Posterior vena cava (tissue), 2 donors: ENCODE measurements at regions of chr1 and their contacts with region 1.

Region 1: DNA sequence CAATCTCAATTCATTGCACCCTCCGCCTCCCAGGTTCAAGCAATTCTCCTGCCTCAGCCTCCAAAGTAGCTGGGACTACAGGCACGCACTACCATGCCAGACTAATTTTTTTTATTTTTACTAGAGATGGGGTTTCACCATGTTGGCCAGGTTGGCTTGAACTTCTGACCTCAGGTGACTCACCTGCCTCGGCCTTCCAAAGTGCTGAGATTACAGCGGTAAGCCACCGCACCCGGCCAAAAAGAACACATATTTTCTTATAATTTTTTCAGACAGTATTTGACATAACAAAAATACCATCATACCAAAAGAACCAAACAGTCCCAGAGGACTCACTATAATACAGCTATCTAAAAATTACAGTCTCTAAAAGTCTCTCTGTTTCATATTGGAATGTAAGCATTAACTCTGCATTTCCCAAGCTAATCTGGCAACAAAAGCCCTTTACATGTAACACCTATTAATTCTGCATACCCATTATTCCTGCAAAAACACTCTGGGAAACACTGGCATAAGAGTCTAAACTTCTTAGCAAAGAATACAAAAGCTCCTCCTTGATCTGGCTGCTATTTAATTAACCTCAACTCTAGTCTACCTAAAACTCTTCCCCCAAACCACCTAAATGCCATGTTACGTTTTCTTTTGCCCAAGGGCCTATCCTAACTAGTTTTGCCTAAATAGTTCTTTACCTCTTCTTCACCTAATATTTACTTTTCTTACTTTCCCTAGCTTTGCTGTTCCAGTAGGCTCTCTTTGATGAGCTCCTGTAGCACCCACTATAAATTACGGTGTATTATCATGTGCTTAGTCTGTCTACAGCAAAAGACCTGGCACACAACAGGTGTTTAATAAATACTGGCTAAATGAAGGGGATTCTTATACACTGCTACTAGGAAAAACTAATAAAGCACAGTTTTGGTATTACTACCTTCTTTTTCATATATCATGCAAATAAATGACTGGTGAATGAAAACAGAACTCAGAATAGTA is 26.7 kb downstream of the WDR26 start:
- DNase-seq: no peak

Region 2: GRCh38 chr1:224472806-224473205 is 64.9 kb after region 1 on chr1:
- intact Hi-C with region 1: no loop called
- DNase-seq: no peak

Region 3: GRCh38 chr1:224632381-224632871 is 224.6 kb after region 1 on chr1:
- intact Hi-C with region 1: no loop called
- DNase-seq: no peak

Region 4: DNA sequence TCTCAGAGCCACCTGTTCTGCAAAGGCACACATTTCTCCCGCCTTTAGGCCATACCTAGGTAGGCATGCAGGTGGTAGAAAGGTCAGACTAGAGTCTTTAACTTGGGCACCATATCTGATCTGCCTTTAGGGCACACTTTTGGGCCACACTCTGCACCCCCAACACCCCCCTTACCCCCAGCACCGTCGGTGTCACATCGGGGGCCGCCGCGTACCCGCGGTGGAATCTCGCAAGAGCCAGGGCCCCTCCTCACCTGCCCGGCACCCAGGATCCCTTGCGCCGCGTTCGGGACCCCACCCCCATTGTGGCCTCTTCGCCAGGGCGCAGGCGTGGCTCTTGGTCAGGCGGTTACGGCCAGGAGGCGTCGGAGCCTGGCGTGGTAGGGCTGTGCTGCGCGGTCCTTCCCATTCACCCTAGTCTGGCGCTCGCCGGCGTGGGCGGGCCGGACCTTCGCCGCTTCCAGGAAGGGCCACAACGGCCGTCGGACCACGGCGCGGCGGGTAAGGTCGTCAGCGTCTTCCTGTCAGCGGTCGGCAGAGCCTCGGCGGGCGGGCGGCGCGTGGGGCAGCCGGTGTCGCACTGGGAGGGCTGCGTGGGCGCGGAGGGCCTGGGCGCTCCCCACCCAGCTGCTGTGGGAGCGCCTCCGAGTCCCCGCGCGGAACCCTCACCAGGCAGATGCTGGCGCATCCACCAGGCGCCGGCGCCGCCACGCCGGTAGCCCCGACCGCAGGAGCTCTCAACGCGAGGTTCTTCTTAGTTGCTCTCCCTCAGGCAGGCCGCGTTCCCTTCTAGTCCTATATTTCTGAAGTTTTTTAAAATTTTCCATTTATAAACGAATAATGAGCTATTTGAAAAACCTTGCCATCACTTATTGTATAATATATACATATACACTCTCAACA is 521.7 kb after region 1 on chr1 and contains the start of gene DNAH14:
- intact Hi-C with region 1: loop called in 1 of 2 experiments (anchors 10 kb)
- DNase-seq: peak; percentile 92
- total RNA-seq, gene DNAH14: 3.1 to 4.0 TPM